ENCODE measurements at regions of chr14 and their contacts with region 1.

Region 1: GRCh38 chr14:24431569-24432258 is 2.0 kb downstream of the KHNYN start:
- DNase-seq: peak; percentile 95
- ATAC-seq: peak; percentile 71
- H3K4me3 Mint-ChIP-seq: peak overlapping the region; percentile 93
- H3K27ac Mint-ChIP-seq: peak overlapping the region; percentile 96
- H3K4me1 Mint-ChIP-seq: peaks cover 60% of the 10 kb centered on the region
- H3K27me3 Mint-ChIP-seq: no peaks in the 10 kb centered on the region

Region 2: DNA sequence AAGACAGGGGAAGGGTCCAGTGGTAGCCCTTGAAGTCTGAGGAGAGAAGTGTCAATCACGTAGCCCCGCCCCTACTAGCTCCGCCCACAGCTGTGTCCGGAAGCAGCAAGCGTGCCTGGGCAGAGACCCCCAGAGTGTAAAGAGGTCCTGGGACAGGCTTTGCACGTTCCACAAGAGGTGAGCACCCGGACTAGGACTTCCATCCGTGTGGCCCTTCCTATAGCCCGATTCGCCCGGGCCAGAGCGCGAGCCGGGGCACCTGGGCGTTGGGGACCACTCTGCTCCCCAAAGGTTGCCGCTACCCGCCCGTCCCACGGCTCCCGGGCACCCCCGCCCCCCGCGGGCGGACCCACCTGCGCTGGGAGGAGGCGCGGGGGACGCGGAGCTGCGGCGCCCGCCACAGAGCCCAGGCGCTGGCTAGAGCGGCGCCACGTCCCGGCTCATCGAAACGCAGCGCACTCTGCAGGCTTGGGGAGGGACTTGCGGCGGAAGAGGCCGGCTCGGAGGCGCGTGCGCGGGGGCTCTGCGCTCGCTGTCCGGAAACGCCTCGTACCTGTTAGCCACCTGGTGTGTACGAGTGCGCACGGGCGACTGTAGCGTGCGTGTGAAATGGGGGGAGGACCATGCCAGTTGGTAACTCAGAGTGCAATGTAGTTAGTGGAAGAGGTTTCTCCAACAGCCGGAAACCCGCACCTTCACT is 160.4 kb before region 1 on chr14 and contains the start of gene RABGGTA:
- CTCF ChIA-PET with region 1: interaction called, 10 read pairs
- POLR2A ChIA-PET with region 1: interaction called, 18 read pairs
- DNase-seq: peak; percentile 93
- ATAC-seq: peak; percentile 94
- H3K4me3 Mint-ChIP-seq: peak within 1 kb of the TSS; percentile 90
- H3K27ac Mint-ChIP-seq: peak within 1 kb of the TSS; percentile 91
- H3K4me1 Mint-ChIP-seq: peaks cover 47% of the 10 kb centered on the region
- H3K27me3 Mint-ChIP-seq: no peaks in the 10 kb centered on the region
- total RNA-seq, gene RABGGTA: 47.7 to 51.8 TPM

Region 3: GRCh38 chr14:24317141-24317928 is 114.4 kb before region 1 on chr14:
- CTCF ChIA-PET with region 1: interaction called, 94 read pairs
- POLR2A ChIA-PET with region 1: interaction called, 23 read pairs
- DNase-seq: no peak
- ATAC-seq: no peak
- H3K4me3 Mint-ChIP-seq: no peak overlapping the region
- H3K27ac Mint-ChIP-seq: no peak overlapping the region
- H3K4me1 Mint-ChIP-seq: peaks cover 49% of the 10 kb centered on the region
- H3K27me3 Mint-ChIP-seq: peaks cover 16% of the 10 kb centered on the region

Region 4: GRCh38 chr14:24347134-24347533 is 84.6 kb before region 1 on chr14:
- CTCF ChIA-PET with region 1: interaction called, 709 read pairs
- POLR2A ChIA-PET with region 1: interaction called, 4 read pairs
- DNase-seq: no peak
- ATAC-seq: no peak
- H3K4me3 Mint-ChIP-seq: no peak overlapping the region
- H3K27ac Mint-ChIP-seq: no peak overlapping the region
- H3K4me1 Mint-ChIP-seq: no peaks in the 10 kb centered on the region
- H3K27me3 Mint-ChIP-seq: peaks cover 49% of the 10 kb centered on the region

Region 5: GRCh38 chr14:24395609-24396582 is 35.8 kb before region 1 on chr14:
- CTCF ChIA-PET with region 1: interaction called, 10 read pairs
- POLR2A ChIA-PET with region 1: interaction called, 4 read pairs
- DNase-seq: no peak
- ATAC-seq: no peak
- H3K4me3 Mint-ChIP-seq: no peak overlapping the region
- H3K27ac Mint-ChIP-seq: no peak overlapping the region
- H3K4me1 Mint-ChIP-seq: peaks cover 11% of the 10 kb centered on the region
- H3K27me3 Mint-ChIP-seq: peaks cover 42% of the 10 kb centered on the region

Region 6: DNA sequence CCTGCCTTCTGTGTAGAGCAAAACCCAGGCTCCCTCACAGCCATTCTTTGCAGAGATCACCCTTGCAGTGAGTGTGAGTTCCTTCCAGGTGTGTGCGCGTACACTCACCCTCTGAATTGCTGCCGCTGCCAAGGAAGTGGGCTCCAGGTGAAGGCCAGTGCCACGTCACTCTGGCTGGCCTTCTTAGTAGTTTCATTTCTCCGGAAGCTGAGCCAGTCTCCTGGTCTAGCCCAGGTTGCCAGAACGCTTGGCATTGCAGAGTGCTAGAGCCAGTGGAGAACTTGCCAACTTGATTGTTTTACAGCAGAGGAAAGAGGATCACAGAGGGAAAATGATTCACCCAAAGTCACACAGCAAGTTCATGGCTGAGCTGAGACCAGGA is 13.2 kb before region 1 on chr14:
- CTCF ChIA-PET with region 1: interaction called, 48 read pairs
- POLR2A ChIA-PET with region 1: interaction called, 23 read pairs
- DNase-seq: no peak
- ATAC-seq: no peak
- H3K4me3 Mint-ChIP-seq: no peak overlapping the region
- H3K27ac Mint-ChIP-seq: no peak overlapping the region
- H3K4me1 Mint-ChIP-seq: no peaks in the 10 kb centered on the region
- H3K27me3 Mint-ChIP-seq: peaks cover 8% of the 10 kb centered on the region

Region 7: DNA sequence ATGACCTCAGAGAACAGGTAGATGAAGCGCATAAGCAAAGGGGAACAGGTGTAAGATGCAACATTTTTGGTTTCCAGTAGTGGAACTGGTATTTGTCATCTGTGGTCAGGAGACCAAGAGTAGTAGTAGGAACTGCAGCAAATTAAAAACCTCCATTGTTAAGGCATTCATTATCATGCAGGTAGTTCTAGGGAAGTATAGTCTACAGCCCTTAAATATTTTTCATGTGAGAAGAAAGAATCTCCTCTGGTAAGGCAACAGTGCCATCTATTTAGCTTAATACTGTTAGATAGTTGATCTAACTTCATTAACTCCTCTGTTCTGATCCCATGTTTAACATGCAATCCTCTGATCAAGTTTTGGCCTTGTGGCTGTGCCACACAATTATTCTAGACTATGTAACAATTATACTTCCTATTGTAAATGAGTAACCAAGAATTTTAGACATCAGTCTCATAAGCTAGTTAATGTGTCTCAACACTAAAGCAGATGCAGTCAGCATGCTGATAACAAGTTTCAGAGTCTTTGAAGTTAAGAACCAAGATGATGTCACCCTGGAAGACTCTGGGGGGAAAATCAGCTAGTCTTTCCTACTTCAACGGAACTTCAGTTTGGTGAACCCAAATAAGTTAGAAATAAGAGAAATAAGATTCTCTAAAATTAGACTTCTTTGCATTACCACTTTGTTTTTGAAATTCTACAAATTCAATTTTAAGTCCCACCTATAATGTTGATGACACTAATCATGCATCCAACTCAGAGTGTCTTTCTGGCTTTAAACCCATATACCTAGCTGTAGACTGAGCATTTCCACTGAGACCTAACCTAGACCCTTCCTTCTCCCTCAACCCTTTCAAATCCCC is 547.4 kb after region 1 on chr14:
- CTCF ChIA-PET with region 1: no interaction called
- POLR2A ChIA-PET with region 1: no interaction called
- DNase-seq: no peak
- ATAC-seq: no peak
- H3K4me3 Mint-ChIP-seq: no peak overlapping the region
- H3K27ac Mint-ChIP-seq: no peak overlapping the region
- H3K4me1 Mint-ChIP-seq: no peaks in the 10 kb centered on the region
- H3K27me3 Mint-ChIP-seq: peaks cover 10% of the 10 kb centered on the region